Ascending aorta (tissue), 2 donors: ENCODE measurements at regions of chr19 and their contacts with region 1.

Region 1: DNA sequence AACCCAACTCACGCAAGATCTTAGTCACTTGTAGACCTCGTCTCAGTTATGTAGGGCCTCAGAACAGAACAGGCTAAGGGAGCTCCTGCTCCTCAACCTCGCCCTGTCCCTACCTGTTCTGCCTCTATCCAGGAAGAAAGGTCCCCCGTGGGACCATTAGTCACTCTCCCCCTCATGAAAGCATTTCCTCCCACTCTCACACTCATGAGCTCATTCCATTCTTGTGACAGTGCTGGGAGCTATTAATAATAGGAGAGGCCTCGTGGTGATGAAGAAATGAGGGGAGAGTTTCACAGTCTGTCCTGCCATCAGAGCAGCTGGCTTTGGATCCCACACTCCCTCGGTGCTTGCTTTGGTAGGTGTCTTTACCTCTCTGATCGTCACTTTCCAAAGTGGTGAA is 10.2 kb downstream of the PPP2R1A start:
- DNase-seq: peak; percentile 52 to 91
- H3K4me3 ChIP-seq: peak overlapping the region in 1 of 2 donors; percentile 11
- H3K27ac ChIP-seq: peak overlapping the region; percentile 78 to 90
- H3K4me1 ChIP-seq: peaks cover 13 to 18% of the 10 kb centered on the region in 2 donors
- H3K27me3 ChIP-seq: no peaks in the 10 kb centered on the region
- CTCF ChIP-seq: no peak

Region 2: GRCh38 chr19:52171321-52172169 is 28.5 kb before region 1 on chr19 and contains the start of gene ZNF836:
- intact Hi-C with region 1: no loop called
- DNase-seq: peak; percentile 53 to 93
- H3K4me3 ChIP-seq: peak within 1 kb of the TSS; percentile 70 to 76
- H3K27ac ChIP-seq: peak within 1 kb of the TSS; percentile 84 to 91
- H3K4me1 ChIP-seq: peaks cover 0 to 6% of the 10 kb centered on the region in 2 donors
- H3K27me3 ChIP-seq: no peaks in the 10 kb centered on the region
- CTCF ChIP-seq: no peak
- total RNA-seq, gene ZNF836: 2.8 TPM

Region 3: GRCh38 chr19:52237771-52238400 is 37.8 kb after region 1 on chr19:
- intact Hi-C with region 1: loop called (anchors 5 kb)
- DNase-seq: peak in 1 of 2 donors; percentile 77
- H3K4me3 ChIP-seq: no peak overlapping the region
- H3K27ac ChIP-seq: no peak overlapping the region
- H3K4me1 ChIP-seq: no peaks in the 10 kb centered on the region
- H3K27me3 ChIP-seq: no peaks in the 10 kb centered on the region
- CTCF ChIP-seq: peak; percentile 72 to 88 (median 86)